Heart left ventricle (tissue), 16 donors: ENCODE measurements at regions of chr9 and their contacts with region 1.

Region 1: GRCh38 chr9:26537211-26537610 is 355.4 kb downstream of the CAAP1 start:
- DNase-seq: no peak
- ATAC-seq: no peak
- H3K4me3 ChIP-seq: no peak overlapping the region
- H3K27ac ChIP-seq: no peak overlapping the region
- H3K4me1 ChIP-seq: no peaks in the 10 kb centered on the region
- H3K27me3 ChIP-seq: no peaks in the 10 kb centered on the region
- CTCF ChIP-seq: no peak
- POLR2A ChIP-seq: no peak

Region 2: GRCh38 chr9:26502311-26502710 is 34.9 kb before region 1 on chr9:
- intact Hi-C with region 1: no loop called
- DNase-seq: no peak
- ATAC-seq: no peak
- H3K4me3 ChIP-seq: no peak overlapping the region
- H3K27ac ChIP-seq: no peak overlapping the region
- H3K4me1 ChIP-seq: no peaks in the 10 kb centered on the region
- H3K27me3 ChIP-seq: no peaks in the 10 kb centered on the region
- CTCF ChIP-seq: no peak
- POLR2A ChIP-seq: no peak

Region 3: GRCh38 chr9:26579056-26579455 is 41.8 kb after region 1 on chr9:
- intact Hi-C with region 1: loop called in 1 of 10 experiments (anchors 10 kb)
- DNase-seq: no peak
- ATAC-seq: no peak
- H3K4me3 ChIP-seq: no peak overlapping the region
- H3K27ac ChIP-seq: no peak overlapping the region
- H3K4me1 ChIP-seq: no peaks in the 10 kb centered on the region
- H3K27me3 ChIP-seq: no peaks in the 10 kb centered on the region
- CTCF ChIP-seq: no peak
- POLR2A ChIP-seq: no peak